PC-3 (cell line): ENCODE measurements at regions of chr6 and their contacts with region 1.

Region 1: DNA sequence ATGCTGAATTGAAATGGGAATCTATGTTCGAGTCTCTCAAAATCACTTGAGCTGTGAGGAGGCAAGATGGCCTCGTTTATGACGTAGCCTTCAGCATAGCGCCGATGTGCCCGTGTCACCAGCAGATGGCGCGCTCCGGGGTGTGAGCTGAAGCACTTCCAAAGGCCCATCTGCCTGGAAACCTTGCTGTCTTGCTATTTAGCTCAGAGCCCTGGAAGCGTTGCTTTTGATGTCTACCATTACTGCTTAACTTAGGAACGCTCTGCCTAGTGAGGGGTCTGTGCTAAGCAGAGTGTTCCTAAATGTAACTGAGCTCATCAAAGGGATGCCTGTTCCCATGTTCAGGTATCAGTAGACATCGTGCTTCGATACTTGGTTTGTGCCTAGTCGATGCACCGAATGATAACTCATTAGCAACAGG is 67.7 kb downstream of the SYCP2L start:
- DNase-seq: peak; percentile 83
- ATAC-seq: peak; percentile 64
- H3K4me3 ChIP-seq: no peak overlapping the region
- H3K27ac ChIP-seq: no peak overlapping the region
- H3K4me1 ChIP-seq: peaks cover 10% of the 10 kb centered on the region
- H3K27me3 ChIP-seq: peaks cover 11% of the 10 kb centered on the region
- CTCF ChIP-seq: peak; percentile 92

Region 2: GRCh38 chr6:11009353-11009752 is 54.8 kb after region 1 on chr6:
- CTCF ChIA-PET with region 1: interaction called, 7 read pairs
- POLR2A ChIA-PET with region 1: no interaction called
- intact Hi-C with region 1: loop called (anchors 2 kb)
- DNase-seq: peak; percentile 62
- ATAC-seq: peak; percentile 17
- H3K4me3 ChIP-seq: peak overlapping the region; percentile 24
- H3K27ac ChIP-seq: peak overlapping the region; percentile 76; the same call in 1 of the 2 replicates
- H3K4me1 ChIP-seq: peaks cover 42% of the 10 kb centered on the region
- H3K27me3 ChIP-seq: no peaks in the 10 kb centered on the region
- CTCF ChIP-seq: no peak

Region 3: GRCh38 chr6:11046721-11047120 is 92.1 kb after region 1 on chr6:
- CTCF ChIA-PET with region 1: no interaction called
- POLR2A ChIA-PET with region 1: no interaction called
- intact Hi-C with region 1: loop called (anchors 2 kb)
- DNase-seq: no peak
- ATAC-seq: no peak
- H3K4me3 ChIP-seq: no peak overlapping the region
- H3K27ac ChIP-seq: no peak overlapping the region
- H3K4me1 ChIP-seq: peaks cover 5% of the 10 kb centered on the region; the same call in 1 of the 2 replicates
- H3K27me3 ChIP-seq: peaks cover 31% of the 10 kb centered on the region
- CTCF ChIP-seq: no peak

Region 4: GRCh38 chr6:11064836-11065235 is 110.2 kb after region 1 on chr6:
- CTCF ChIA-PET with region 1: interaction called, 19 read pairs
- POLR2A ChIA-PET with region 1: no interaction called
- intact Hi-C with region 1: loop called (anchors 1 kb)
- DNase-seq: no peak
- ATAC-seq: no peak
- H3K4me3 ChIP-seq: no peak overlapping the region
- H3K27ac ChIP-seq: no peak overlapping the region
- H3K4me1 ChIP-seq: no peaks in the 10 kb centered on the region
- H3K27me3 ChIP-seq: no peaks in the 10 kb centered on the region
- CTCF ChIP-seq: no peak

Region 5: DNA sequence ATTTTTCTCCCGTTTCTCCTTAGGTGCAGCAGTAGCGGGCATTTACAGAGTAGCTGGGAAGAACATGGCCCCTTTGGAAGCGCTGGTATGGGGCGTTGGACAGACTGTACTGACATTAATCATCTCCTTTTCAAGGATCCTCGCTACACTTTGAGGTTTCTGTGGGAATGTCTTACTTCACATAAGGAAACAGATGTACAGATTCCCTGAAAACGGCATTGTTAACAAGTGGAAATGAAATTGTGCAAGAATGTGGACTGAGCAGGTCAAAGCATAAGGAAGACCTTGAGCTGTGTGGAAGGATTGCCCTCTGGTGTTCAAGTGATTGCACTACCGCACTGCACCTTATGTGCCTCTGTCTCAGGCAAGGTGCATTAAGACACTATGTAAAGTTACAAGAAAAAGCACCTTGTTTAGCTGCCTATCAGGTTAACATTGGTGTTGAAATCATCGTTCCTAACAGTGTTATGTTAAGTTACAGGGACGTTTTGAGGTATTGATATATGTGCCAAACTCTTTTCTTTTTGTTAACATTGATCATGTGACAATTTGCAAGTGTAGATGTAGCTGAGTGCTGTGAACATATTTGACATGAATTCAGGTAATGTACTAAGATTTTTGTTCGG is 620.9 kb after region 1 on chr6:
- CTCF ChIA-PET with region 1: interaction called, 4 read pairs
- POLR2A ChIA-PET with region 1: no interaction called
- intact Hi-C with region 1: loop called (anchors 1 kb)
- DNase-seq: peak; percentile 85
- ATAC-seq: peak; percentile 100
- H3K4me3 ChIP-seq: peak overlapping the region; percentile 21
- H3K27ac ChIP-seq: no peak overlapping the region
- H3K4me1 ChIP-seq: 0 out of 2 replicates have a peak, but pooled peaks cover 3% of the 10 kb centered on the region
- H3K27me3 ChIP-seq: no peaks in the 10 kb centered on the region
- CTCF ChIP-seq: peak; percentile 95

Region 6: GRCh38 chr6:11672256-11672655 is 717.7 kb after region 1 on chr6:
- CTCF ChIA-PET with region 1: no interaction called
- POLR2A ChIA-PET with region 1: no interaction called
- intact Hi-C with region 1: no loop called
- DNase-seq: no peak
- ATAC-seq: no peak
- H3K4me3 ChIP-seq: no peak overlapping the region
- H3K27ac ChIP-seq: no peak overlapping the region
- H3K4me1 ChIP-seq: no peaks in the 10 kb centered on the region
- H3K27me3 ChIP-seq: no peaks in the 10 kb centered on the region
- CTCF ChIP-seq: no peak